ENCODE measurements at regions of chr15 and their contacts with region 1.

Region 1: GRCh38 chr15:67863442-67863987 is 23.7 kb upstream of the RNU6-1 start:
- DNase-seq: peak; percentile 54 to 73
- H3K4me3 ChIP-seq: peak overlapping the region; percentile 33 to 60 (median 42)
- H3K27ac ChIP-seq: no peak overlapping the region
- H3K4me1 ChIP-seq: no peaks in the 10 kb centered on the region
- H3K27me3 ChIP-seq: no peaks in the 10 kb centered on the region
- CTCF ChIP-seq: peak; percentile 80 to 96 (median 87)
- POLR2A ChIP-seq: no peak

Region 2: DNA sequence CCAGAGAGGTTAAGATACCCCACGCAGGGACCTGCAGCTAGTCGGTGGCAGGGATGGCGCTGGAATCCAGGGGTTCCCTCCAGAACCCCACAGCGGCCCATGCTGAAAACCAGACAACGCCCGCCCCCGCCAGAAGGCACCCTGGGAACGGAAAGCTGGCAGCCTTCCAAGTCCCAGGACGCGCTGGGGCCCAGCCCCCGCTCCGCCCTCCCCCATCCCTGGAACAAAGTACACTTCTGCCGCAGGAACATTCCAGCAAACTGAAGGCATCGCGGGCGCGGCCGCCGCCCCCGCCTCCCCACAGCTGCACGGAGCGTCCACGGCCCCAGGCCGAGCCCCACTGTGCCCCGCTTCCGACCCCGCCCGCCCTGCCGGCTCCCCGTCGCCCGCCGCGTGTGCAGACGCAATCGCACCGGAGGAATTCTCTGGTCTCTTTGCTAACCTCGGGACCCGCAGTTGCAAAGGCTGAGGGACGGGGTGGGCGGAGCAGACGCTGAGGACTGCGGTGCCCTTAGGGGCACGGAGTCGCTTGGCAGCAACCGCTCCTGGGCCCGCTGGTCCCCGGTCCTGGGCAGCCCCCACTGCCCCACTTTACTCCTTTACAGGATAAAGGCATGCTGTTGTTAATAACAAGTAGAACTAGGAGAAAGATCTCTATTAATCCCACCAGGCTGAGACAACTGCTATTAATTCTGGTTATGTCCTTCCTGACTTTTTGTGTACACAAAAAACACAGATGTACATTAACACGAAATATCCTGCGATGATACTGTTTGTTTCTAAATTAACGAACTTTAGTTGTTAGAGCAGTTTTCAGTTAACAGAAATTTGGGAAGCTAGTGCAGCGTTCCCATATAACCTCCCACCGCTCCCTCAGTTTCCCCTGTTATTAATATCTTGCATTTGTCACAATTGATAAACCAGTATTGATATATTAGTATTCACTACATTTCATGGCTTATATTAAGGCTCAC is 21.3 kb after region 1 on chr15:
- intact Hi-C with region 1: loop called (anchors 1 kb)
- DNase-seq: peak; percentile 81 to 83
- H3K4me3 ChIP-seq: peak overlapping the region; percentile 41 to 69 (median 60)
- H3K27ac ChIP-seq: peak overlapping the region; percentile 74 to 79
- H3K4me1 ChIP-seq: no peaks in the 10 kb centered on the region
- H3K27me3 ChIP-seq: no peaks in the 10 kb centered on the region
- CTCF ChIP-seq: no peak
- POLR2A ChIP-seq: no peak

Region 3: GRCh38 chr15:68106656-68107055 is 243.1 kb after region 1 on chr15:
- intact Hi-C with region 1: no loop called
- DNase-seq: no peak
- H3K4me3 ChIP-seq: no peak overlapping the region
- H3K27ac ChIP-seq: no peak overlapping the region
- H3K4me1 ChIP-seq: no peaks in the 10 kb centered on the region
- H3K27me3 ChIP-seq: no peaks in the 10 kb centered on the region
- CTCF ChIP-seq: no peak
- POLR2A ChIP-seq: no peak

Region 4: DNA sequence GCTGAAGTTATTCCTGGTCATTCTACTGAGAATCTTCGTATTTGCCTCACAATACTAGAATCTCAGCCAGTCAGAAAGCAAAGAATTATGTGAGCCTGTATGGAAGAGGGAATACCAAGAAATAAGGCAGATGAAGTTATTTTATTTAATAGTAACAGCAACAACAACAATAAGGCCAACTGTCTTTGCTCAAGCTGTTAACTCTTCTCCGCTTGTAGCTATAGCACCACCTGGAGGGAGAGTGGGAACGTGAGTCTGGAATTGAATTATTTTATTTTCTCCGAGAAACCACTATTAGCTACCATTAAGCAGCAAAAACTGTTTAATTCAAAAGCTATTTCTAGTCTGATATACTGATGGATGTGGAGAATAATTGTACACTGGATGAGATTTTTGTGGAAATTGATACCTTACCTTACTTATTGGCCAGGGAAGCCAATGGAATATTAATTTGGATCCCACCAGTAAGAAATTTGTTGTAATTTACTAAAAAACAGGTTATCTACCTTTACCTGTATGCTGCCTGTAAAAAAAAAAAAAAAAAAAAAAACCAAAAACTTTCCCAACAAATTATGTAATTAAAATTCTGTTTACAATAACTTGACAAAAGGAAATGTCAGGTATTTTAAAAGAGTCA is 291.5 kb after region 1 on chr15:
- intact Hi-C with region 1: loop called (anchors 10 kb)
- DNase-seq: no peak
- H3K4me3 ChIP-seq: no peak overlapping the region
- H3K27ac ChIP-seq: no peak overlapping the region
- H3K4me1 ChIP-seq: no peaks in the 10 kb centered on the region
- H3K27me3 ChIP-seq: no peaks in the 10 kb centered on the region
- CTCF ChIP-seq: peak; percentile 44 to 81 (median 70)
- POLR2A ChIP-seq: no peak

Region 5: DNA sequence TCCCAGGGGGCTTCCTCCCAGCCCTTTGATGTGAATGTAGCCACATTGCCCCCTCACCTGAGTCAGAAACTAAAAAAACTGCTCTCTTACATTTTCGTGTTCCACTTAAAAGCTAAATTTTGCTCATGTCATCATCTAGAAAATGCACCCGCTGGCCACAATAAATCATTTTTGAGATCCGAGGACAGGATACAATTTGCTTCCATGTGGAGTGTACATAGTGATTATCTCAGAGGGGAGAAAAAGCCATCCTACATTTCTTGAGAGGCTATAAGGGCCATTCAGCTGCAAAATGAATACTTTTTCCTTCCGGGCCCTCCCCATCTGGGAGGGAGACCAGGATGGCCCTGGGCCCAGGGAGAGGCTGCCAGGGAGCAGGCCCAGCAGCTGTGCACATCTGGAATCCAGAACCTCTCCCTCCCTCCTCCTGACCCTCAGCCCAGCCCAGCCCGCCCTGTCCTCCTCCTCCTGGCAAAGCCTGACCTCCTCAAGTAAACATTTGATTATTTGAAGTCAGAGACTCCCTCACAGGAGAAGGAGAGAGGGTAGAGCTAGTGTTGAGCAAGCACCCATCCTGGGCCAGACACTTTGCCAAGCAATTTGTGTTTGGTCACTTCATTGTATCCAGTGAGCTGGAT is 774.4 kb after region 1 on chr15:
- intact Hi-C with region 1: no loop called
- DNase-seq: no peak
- H3K4me3 ChIP-seq: no peak overlapping the region
- H3K27ac ChIP-seq: peak overlapping the region; percentile 82 to 88
- H3K4me1 ChIP-seq: peaks cover 0 to 9% of the 10 kb centered on the region in 2 donors
- H3K27me3 ChIP-seq: no peaks in the 10 kb centered on the region
- CTCF ChIP-seq: no peak
- POLR2A ChIP-seq: no peak

Region 6: DNA sequence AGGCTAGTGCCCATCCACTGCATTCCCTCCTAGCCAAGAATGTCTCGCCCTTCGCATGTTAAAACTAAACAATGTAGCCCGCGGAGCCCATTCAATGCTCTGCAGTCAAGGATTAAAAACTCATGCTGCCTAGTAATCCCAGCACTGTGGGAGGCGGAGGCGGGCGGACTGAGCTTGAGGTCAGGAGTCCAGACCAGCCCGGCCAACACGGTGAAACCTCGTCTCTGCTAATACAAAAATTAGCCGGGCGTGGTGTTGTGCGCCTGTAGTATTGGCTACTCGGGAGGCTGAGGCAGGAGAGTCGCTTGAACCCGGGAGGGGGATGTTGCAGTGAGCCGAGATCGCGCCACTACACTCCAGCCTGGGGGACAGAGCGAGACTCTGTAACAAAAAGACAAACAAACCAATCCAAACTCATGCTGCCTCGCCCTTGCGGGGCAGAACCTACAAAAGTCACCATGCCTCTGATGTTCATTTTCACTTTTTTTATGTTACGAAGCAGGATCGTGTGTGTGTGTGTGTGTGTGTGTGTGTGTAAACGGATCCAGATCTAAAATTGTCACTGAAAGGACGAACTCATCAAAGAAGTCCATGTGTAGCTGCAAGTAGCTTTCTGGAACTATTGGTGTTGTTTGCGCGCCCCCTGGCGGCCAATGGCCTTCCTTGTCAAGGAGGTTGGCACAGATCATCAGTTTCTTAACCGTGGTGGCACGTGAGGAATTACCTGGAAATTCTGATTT is 1012.0 kb after region 1 on chr15:
- intact Hi-C with region 1: no loop called
- DNase-seq: peak; percentile 90 to 95
- H3K4me3 ChIP-seq: peak overlapping the region; percentile 29 to 58 (median 40)
- H3K27ac ChIP-seq: no peak overlapping the region
- H3K4me1 ChIP-seq: no peaks in the 10 kb centered on the region
- H3K27me3 ChIP-seq: no peaks in the 10 kb centered on the region
- CTCF ChIP-seq: peak; percentile 92 to 95 (median 92)
- POLR2A ChIP-seq: no peak

Measured in breast epithelium (tissue), 4 donors.